B cell (primary cell): ENCODE measurements at regions of chr1 and their contacts with region 1.

Region 1: DNA sequence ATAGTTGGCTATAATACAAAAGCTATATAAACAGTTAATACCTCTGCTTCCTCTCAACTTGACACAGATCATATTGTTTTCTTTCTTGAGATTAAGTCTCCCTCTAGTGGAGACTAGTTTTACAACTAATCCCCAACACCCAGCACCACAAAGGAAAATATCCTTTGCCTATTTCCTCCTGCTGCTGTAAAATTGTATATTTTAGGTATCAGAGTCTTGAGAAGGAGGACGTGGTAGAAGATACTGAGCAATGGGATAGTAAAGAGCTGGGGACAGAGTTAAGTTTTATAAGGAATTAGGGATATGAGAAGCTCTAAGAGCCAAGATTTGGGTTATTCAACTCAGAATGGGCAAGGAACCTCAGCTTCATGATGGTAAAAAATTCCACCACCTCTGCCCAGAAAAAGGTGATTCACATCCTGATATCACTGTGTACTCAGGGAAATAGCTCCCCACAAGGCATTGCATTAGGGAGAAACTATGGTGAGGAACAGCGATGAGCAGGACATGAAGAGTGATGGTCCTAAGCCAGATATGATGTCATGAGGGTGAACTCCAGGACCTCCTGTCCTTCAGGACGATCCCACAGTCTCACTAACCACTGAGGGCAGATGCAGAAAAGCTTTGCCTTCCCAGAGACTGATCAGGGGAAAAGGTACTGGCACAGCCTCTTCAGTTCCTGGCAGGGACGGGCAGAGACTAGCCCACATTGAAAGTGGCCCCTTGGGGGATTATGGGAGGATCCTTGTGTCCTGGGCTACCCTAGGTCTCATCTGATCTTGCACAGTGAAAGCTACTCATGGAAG is 14.7 kb upstream of the CFAP126 start:
- DNase-seq: peak; percentile 68
- ATAC-seq: peak; percentile 86
- H3K4me3 ChIP-seq: no peak overlapping the region
- H3K4me3 Mint-ChIP-seq: no peak overlapping the region
- H3K27ac ChIP-seq: no peak overlapping the region
- H3K27ac Mint-ChIP-seq: no peak overlapping the region
- H3K4me1 ChIP-seq: peaks cover 3% of the 10 kb centered on the region in 2 donors
- H3K4me1 Mint-ChIP-seq: peaks cover 6% of the 10 kb centered on the region
- H3K27me3 ChIP-seq: no peaks in the 10 kb centered on the region
- H3K27me3 Mint-ChIP-seq: no peaks in the 10 kb centered on the region
- CTCF ChIP-seq: peak; percentile 85

Region 2: DNA sequence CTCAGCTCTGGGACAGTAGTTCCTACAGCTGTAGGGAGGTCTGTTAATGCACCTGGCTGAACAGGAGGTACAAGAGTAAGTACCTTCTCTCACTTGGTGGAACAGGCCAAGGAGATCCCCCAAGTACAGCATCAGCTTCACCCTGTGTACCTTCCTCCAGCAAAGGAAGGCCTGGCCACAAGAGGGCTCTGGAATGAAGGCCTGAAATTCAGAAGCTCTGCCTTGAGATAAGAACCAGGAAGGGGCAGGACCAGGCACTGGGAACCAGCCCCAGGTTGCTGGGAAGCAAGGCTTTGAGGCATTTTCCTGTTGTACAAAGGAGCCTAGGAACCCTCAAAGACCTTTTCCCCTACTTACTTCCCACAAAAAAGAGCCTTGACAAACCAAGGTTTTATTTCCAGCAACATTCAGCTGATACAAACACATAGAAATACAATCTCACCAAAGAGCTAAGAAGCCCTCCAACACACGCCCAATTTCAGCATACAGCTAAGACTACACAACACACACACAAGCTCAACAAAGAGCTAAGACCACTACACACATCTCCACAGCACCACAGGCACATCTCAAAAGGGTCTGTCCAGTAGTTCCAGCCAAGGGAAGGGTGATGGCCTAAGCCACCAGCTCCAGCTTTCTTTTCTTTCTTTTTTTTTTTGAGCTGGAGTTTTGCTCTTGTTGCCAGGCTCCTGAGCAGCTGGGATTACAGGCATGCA is 384.9 kb before region 1 on chr1:
- CTCF ChIA-PET with region 1: interaction called, 11 read pairs
- POLR2A ChIA-PET with region 1: no interaction called
- intact Hi-C with region 1: no loop called
- DNase-seq: peak; percentile 69
- ATAC-seq: peak; percentile 82
- H3K4me3 ChIP-seq: no peak overlapping the region
- H3K4me3 Mint-ChIP-seq: no peak overlapping the region
- H3K27ac ChIP-seq: peak overlapping the region; percentile 15 to 51
- H3K27ac Mint-ChIP-seq: peak overlapping the region; percentile 68
- H3K4me1 ChIP-seq: peaks cover 0 to 5% of the 10 kb centered on the region in 2 donors
- H3K4me1 Mint-ChIP-seq: peaks cover 4% of the 10 kb centered on the region
- H3K27me3 ChIP-seq: no peaks in the 10 kb centered on the region
- H3K27me3 Mint-ChIP-seq: no peaks in the 10 kb centered on the region
- CTCF ChIP-seq: peak; percentile 52

Region 3: DNA sequence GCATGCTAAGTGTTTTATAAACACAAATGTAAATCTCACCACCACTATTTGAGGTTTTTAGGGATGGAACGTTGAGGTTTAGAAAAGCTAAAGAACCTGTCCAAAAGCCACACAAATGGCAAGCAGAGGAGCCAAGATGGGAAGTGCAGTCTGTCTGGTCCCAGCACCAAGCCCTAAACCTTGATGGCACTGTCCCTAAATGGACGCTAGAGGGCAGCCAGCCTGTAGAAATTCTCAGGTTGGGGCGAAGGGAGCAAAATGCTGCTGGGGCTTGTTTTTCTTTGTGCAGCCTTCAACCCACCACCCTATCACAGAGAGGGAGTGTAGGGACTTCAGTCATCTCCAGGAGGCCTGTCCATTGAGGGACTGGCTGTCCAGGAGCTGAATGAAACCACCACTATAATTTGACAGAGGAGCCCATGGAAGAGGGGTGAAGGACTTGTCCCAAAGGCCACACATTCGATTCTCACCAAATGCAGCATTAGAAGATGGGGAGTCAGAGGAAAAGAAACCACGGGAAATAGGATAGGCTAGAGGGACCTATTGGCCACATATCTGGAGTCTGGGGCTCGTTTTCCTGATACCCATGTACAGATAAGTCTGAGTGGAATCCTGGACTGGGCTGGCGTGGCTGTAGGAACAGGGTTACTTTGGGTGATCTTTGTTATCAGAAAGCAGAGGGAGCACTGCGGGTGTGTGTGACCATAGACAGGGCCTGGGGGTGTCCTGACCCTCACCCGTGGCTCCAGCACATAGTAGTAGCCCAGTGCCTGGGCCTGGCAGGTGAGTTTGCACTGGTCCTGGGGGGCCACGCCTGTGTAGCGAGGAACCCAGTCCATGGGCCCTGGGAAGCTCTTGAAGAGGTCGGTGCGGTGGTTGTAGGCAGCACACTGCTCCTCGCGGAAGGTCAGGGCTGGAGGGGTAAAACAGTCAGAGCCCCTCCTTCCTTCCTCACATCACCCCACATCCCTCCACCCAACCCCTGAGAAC is 189.6 kb before region 1 on chr1:
- CTCF ChIA-PET with region 1: interaction called, 29 read pairs
- POLR2A ChIA-PET with region 1: no interaction called
- intact Hi-C with region 1: loop called (anchors 1 kb)
- DNase-seq: peak; percentile 83
- ATAC-seq: peak; percentile 91
- H3K4me3 ChIP-seq: no peak overlapping the region
- H3K4me3 Mint-ChIP-seq: no peak overlapping the region
- H3K27ac ChIP-seq: no peak overlapping the region
- H3K27ac Mint-ChIP-seq: peak overlapping the region; percentile 72
- H3K4me1 ChIP-seq: peaks cover 56 to 71% of the 10 kb centered on the region in 2 donors
- H3K4me1 Mint-ChIP-seq: peaks cover 56% of the 10 kb centered on the region
- H3K27me3 ChIP-seq: no peaks in the 10 kb centered on the region
- H3K27me3 Mint-ChIP-seq: no peaks in the 10 kb centered on the region
- CTCF ChIP-seq: peak; percentile 92

Region 4: GRCh38 chr1:161209790-161210409 is 172.5 kb before region 1 on chr1:
- CTCF ChIA-PET with region 1: interaction called, 33 read pairs
- POLR2A ChIA-PET with region 1: interaction called, 4 read pairs
- intact Hi-C with region 1: loop called (anchors 1 kb)
- DNase-seq: peak; percentile 81
- ATAC-seq: peak; percentile 99
- H3K4me3 ChIP-seq: no peak overlapping the region
- H3K4me3 Mint-ChIP-seq: no peak overlapping the region
- H3K27ac ChIP-seq: no peak overlapping the region
- H3K27ac Mint-ChIP-seq: no peak overlapping the region
- H3K4me1 ChIP-seq: peaks cover under 1% of the 10 kb centered on the region in 2 donors
- H3K4me1 Mint-ChIP-seq: peaks cover 3% of the 10 kb centered on the region
- H3K27me3 ChIP-seq: peaks cover 0 to under 1% (median under 1%) of the 10 kb centered on the region in 4 experiments
- H3K27me3 Mint-ChIP-seq: peaks cover 4% of the 10 kb centered on the region
- CTCF ChIP-seq: peak; percentile 74

Region 5: DNA sequence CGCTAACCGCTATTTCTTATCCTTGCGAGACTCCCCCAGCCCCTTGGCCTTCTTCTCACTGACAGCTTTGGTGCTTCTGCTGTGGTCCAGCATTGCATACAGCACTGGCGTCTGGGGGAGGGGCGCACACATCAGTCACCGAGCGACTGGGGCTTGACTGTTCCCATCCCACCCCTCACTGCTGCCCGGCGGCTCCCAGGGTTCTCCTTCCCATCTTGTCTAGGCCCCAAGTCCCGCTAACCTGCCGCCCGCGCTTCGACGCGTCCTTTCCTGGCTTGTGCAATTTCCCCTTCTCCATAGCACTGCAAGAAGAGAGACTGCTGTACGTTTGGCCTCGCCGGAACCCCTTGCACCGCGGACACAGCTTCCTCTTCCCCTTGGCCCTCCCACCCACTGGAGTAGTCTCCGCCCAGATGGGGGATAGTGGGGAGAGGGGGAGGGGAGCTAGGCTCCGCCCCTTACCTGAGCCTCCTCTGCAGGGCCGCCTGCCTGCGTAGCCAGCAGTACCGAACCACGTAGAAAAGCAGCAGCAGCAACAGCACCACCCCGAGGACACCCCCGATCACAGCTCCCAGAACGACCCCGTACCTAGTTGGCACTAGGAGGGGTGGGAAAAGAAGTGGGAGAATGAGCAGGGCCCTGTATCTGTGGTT is 76.4 kb before region 1 on chr1:
- CTCF ChIA-PET with region 1: interaction called, 12 read pairs
- POLR2A ChIA-PET with region 1: no interaction called
- intact Hi-C with region 1: loop called (anchors 5 kb)
- DNase-seq: peak; percentile 93
- ATAC-seq: peak; percentile 89
- H3K4me3 ChIP-seq: peak overlapping the region; percentile 66 to 91 (median 80)
- H3K4me3 Mint-ChIP-seq: peak overlapping the region; percentile 97
- H3K27ac ChIP-seq: peak overlapping the region; percentile 59 to 72
- H3K27ac Mint-ChIP-seq: peak overlapping the region; percentile 93
- H3K4me1 ChIP-seq: peaks cover 26% of the 10 kb centered on the region in 2 donors
- H3K4me1 Mint-ChIP-seq: peaks cover 42% of the 10 kb centered on the region
- H3K27me3 ChIP-seq: no peaks in the 10 kb centered on the region
- H3K27me3 Mint-ChIP-seq: no peaks in the 10 kb centered on the region
- CTCF ChIP-seq: peak; percentile 49

Region 6: DNA sequence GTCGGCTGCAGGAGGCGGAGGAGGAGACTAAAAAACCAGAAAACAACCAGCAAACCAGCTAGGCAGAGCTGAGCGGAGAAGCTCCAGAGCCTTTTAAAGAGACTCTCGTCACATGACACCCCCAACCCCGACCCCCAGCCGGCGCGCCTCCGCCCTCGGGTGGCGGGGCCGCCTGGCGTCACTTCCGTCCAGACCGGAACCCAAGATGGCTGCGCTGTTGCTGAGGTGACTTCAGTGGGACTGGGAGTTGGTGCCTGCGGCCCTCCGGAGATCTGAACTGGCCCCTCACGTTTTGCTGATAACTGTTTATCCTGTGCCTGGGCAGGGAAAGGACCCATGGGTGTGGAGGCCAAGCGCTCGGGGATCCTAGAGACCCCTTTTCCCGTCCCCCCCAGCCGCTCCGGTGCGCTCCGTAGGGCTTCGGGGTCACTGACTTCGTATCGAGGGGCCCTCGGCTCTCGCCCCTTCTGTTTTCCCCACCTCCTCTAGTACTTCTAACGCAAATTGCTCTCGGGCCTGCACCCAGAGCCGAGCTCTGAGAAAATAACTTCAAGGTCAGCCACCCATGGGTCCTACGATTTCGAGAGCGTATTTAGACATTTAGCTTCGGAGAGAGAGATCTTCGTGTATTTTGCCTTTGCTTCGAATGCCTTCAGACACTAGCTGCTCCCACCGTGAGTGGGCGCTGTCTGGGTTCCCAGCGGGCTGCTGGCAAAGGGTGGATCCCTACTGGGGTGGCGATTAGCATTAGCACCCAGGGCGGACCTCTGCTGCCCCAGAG is 68.0 kb before region 1 on chr1 and contains the start of gene SDHC:
- CTCF ChIA-PET with region 1: interaction called, 10 read pairs
- POLR2A ChIA-PET with region 1: interaction called, 3 read pairs
- intact Hi-C with region 1: loop called (anchors 5 kb)
- DNase-seq: peak; percentile 93
- ATAC-seq: peak; percentile 95
- H3K4me3 ChIP-seq: peak within 1 kb of the TSS; percentile 87 to 97 (median 94)
- H3K4me3 Mint-ChIP-seq: peak within 1 kb of the TSS; percentile 90
- H3K27ac ChIP-seq: peak within 1 kb of the TSS; percentile 88 to 97
- H3K27ac Mint-ChIP-seq: peak within 1 kb of the TSS; percentile 93
- H3K4me1 ChIP-seq: peaks cover 8 to 15% of the 10 kb centered on the region in 2 donors
- H3K4me1 Mint-ChIP-seq: peaks cover 25% of the 10 kb centered on the region
- H3K27me3 ChIP-seq: no peaks in the 10 kb centered on the region
- H3K27me3 Mint-ChIP-seq: no peaks in the 10 kb centered on the region
- CTCF ChIP-seq: peak; percentile 21
- total RNA-seq, gene SDHC: 99.0 and 109 TPM in 2 replicates

Region 7: GRCh38 chr1:161367684-161368400 is 14.6 kb before region 1 on chr1 and contains the start of gene CFAP126:
- CTCF ChIA-PET with region 1: interaction called, 10 read pairs
- POLR2A ChIA-PET with region 1: no interaction called
- intact Hi-C with region 1: no loop called
- DNase-seq: peak; percentile 91
- ATAC-seq: peak; percentile 100
- H3K4me3 ChIP-seq: no peak within 1 kb of the TSS
- H3K4me3 Mint-ChIP-seq: no peak within 1 kb of the TSS
- H3K27ac ChIP-seq: peak within 1 kb of the TSS; percentile 69 to 91
- H3K27ac Mint-ChIP-seq: peak within 1 kb of the TSS; percentile 32
- H3K4me1 ChIP-seq: peaks cover 7 to 9% of the 10 kb centered on the region in 2 donors
- H3K4me1 Mint-ChIP-seq: peaks cover 8% of the 10 kb centered on the region
- H3K27me3 ChIP-seq: no peaks in the 10 kb centered on the region
- H3K27me3 Mint-ChIP-seq: no peaks in the 10 kb centered on the region
- CTCF ChIP-seq: peak; percentile 48
- total RNA-seq, gene CFAP126: not detected in 2 replicates